Posterior vena cava (tissue), 2 donors: ENCODE measurements at regions of chr7 and their contacts with region 1.

Region 1: GRCh38 chr7:4667776-4668509 is 14.2 kb upstream of the FOXK1 start:
- DNase-seq: peak; percentile 50

Region 2: DNA sequence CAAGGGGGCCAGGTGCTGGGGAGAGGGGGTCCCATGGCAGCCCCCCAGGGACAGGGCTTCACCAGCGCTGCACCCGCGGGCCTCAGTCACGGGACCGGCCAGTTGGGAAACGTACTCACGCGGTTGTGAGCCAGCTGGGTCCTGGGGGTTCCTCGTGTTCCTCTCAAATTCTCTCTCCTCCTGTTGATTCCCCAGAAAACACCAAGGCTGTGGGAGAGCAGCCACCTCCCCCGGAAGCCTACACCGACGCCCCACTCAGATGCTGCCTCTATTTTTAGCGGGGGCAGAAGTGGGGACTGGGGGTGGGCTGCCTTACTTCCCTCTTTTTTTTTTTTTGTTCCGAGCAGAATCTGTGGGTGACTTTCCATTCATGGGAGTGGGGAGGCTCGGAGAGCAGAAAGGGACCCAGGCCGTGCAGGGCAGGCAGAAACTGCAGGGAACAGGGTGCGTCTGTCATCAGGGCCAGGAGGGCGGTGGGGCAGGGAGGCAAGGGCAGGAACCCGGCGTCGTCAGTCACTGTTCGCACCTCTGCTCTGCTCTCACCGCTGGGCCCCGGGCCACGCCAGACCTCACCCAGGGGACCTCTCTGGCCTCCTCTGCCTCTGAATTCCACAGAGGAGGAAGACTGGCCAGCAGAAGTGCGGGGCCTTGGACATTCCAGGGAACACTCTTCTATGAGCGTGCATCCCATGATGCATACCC is 1687.4 kb before region 1 on chr7:
- intact Hi-C with region 1: loop called in 1 of 2 experiments (anchors 5 kb)
- DNase-seq: peak; percentile 74